PC-3 (cell line): ENCODE measurements at regions of chr2 and their contacts with region 1.

Region 1: DNA sequence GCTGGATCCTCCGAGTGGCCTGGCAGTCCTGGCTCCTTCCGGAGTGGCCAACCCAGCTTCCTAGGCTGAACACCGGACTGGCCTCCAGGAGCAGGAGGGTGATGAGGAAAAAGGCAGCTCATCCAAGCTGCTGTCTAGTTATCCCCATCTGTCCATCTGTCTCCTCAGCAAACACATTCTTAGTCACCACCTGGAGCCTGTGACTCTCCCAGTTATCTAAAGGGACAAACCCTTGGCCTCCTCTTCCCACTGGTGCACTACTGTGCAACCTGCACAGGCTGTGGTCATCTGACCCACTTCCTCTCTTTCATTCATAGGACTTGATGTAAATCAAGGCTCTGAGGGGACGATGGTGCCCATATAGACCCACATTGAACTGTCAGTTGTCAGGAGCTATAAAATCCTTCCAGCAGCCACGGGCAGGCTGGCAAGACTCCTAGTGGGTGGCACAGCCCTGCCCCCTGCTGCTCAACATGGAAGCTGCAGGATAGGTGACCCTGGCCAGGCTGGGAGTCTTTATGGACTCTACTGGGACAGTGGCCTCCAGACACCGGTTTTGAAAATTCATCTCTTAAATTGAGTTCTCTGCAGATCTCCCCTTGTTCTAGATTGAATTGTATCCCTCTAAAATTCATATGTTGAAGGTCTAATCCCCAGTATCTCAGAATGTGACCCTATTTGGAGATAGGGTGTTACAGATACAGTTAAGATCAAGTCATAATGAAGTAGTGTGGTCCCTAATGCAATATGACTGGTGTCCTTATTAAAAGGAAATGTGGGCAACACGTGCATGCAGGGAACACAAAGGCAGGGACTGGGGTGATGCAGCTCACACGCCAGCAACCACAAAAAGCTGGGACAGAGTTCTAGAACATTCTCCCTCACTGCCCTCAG is 29.3 kb upstream of the DUSP2 start:
- DNase-seq: peak; percentile 79
- ATAC-seq: peak; percentile 95
- H3K4me3 ChIP-seq: no peak overlapping the region
- H3K27ac ChIP-seq: no peak overlapping the region
- H3K4me1 ChIP-seq: no peaks in the 10 kb centered on the region
- H3K27me3 ChIP-seq: no peaks in the 10 kb centered on the region
- CTCF ChIP-seq: peak; percentile 95

Region 2: DNA sequence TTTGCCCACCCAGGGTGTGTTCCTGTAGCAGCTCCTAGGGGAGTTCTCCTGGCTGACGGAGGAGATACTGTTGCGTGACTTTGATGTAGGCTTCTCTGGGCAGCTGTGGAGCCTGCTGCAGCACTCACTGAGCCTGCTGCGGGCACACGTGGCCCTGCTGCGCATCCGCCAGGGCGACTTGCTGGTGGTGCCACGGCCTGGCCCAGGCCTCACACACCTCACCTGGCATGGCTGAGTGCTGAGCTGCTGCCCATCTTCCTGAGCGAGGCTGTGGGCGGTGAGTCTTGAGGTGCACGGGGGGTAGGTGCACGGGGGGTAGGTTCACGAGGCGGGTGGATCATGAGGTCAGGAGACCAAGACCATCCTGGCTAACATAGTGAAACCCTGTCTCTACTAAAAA is 374.6 kb before region 1 on chr2:
- CTCF ChIA-PET with region 1: no interaction called
- POLR2A ChIA-PET with region 1: no interaction called
- intact Hi-C with region 1: no loop called
- DNase-seq: no peak
- ATAC-seq: no peak
- H3K4me3 ChIP-seq: no peak overlapping the region
- H3K27ac ChIP-seq: no peak overlapping the region
- H3K4me1 ChIP-seq: no peaks in the 10 kb centered on the region
- H3K27me3 ChIP-seq: no peaks in the 10 kb centered on the region
- CTCF ChIP-seq: no peak

Region 3: GRCh38 chr2:96024336-96025193 is 149.9 kb before region 1 on chr2:
- CTCF ChIA-PET with region 1: interaction called, 11 read pairs
- POLR2A ChIA-PET with region 1: no interaction called
- intact Hi-C with region 1: no loop called
- DNase-seq: no peak
- ATAC-seq: no peak
- H3K4me3 ChIP-seq: no peak overlapping the region
- H3K27ac ChIP-seq: no peak overlapping the region
- H3K4me1 ChIP-seq: no peaks in the 10 kb centered on the region
- H3K27me3 ChIP-seq: no peaks in the 10 kb centered on the region
- CTCF ChIP-seq: no peak

Region 4: GRCh38 chr2:96138179-96139145 is 36.0 kb before region 1 on chr2 and contains the start of gene ASTL:
- CTCF ChIA-PET with region 1: interaction called, 34 read pairs
- POLR2A ChIA-PET with region 1: no interaction called
- intact Hi-C with region 1: loop called (anchors 1 kb)
- DNase-seq: peak; percentile 64
- ATAC-seq: peak; percentile 86
- H3K4me3 ChIP-seq: no peak within 1 kb of the TSS; the same call in 1 of the 2 replicates
- H3K27ac ChIP-seq: no peak within 1 kb of the TSS
- H3K4me1 ChIP-seq: peaks cover 5% of the 10 kb centered on the region; the same call in 1 of the 2 replicates
- H3K27me3 ChIP-seq: no peaks in the 10 kb centered on the region
- CTCF ChIP-seq: peak; percentile 70
- total RNA-seq, gene ASTL: not detected in 2 replicates

Region 5: GRCh38 chr2:96213379-96213778 is 38.9 kb after region 1 on chr2:
- CTCF ChIA-PET with region 1: interaction called, 10 read pairs
- POLR2A ChIA-PET with region 1: no interaction called
- intact Hi-C with region 1: no loop called
- DNase-seq: no peak
- ATAC-seq: no peak
- H3K4me3 ChIP-seq: no peak overlapping the region
- H3K27ac ChIP-seq: no peak overlapping the region
- H3K4me1 ChIP-seq: peaks cover 12% of the 10 kb centered on the region; the same call in 1 of the 2 replicates
- H3K27me3 ChIP-seq: no peaks in the 10 kb centered on the region
- CTCF ChIP-seq: peak; percentile 20; the same call in 1 of the 2 replicates